ENCODE measurements at regions of chr22 and their contacts with region 1.

Region 1: DNA sequence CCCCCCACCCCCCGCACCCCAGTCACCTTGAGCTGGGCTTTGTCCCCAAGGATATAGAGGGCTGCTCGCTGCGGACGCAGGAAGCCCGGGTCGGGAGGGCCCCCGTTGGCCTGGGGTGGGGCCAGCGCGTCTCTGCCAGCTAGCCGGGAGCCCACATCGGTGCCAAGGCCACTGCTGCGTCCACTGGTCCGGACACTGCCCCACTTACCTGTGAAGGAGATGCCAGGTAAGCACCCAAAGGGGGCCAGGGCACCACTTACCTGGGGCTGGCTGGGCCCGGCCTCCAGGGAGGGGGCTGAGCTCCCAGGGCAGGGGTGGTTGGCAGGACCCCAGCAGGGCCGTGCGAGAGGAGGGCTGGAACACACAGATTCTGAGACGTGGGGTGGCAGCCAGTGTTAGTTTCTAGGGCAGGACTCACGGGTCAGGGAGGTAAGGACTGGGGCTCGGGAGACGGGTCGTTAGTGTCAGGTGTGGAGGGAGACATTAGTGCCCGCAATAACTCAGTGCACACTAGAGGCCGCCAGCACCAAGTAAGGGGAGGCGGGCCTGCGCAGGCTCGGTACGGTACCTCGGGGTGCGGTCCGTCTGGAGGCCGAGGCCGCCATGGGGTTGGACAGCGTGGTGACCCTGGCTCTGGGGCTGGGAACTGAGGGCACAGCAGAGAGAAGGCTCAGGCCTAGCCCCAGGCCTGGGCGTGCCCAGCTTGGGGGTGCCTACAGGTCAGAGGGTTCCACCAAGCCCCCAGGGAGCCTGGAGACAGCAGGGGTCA is 18.2 kb downstream of the SBF1 start:
- DNase-seq: no peak
- H3K4me3 Mint-ChIP-seq: no peak overlapping the region
- H3K27ac Mint-ChIP-seq: no peak overlapping the region
- H3K4me1 Mint-ChIP-seq: peaks cover 3% of the 10 kb centered on the region
- H3K27me3 Mint-ChIP-seq: no peaks in the 10 kb centered on the region

Region 2: DNA sequence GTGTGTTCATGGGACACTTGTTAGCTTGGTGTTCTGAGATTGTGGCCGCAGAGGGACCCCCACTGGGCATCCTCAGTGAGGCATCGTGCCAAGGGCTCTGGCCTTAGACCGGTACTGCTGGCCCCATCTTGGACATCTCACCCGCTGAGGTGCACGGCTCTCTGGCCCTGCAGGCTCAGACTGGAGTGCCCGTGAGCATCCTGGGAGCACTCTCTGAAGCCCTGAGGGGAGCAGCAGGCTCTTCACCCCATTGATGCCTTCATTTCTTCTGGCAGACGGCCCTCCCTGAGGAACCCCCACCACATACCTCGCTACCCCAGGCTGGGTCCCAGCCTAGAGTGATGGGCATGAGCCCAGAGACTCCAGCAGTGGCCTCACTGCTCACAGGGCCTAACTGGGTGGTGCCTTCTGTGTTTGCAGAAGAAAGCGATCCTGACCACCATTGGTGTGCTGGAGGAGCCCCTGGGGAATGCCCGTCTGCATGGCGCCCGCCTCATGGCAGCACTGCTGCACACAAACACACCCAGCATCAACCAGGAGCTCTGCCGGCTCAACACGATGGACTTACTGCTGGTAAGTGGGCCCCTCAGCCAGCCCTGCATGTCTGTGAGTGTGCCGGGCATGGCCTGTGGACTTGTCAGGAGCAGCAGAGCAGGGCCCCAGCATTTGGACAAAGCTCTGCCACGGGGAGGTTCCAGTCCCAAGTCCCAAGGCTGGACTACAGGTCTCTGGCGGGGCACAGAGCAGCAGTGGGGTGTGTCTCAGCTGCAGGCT is 33.4 kb before region 1 on chr22:
- CTCF ChIA-PET with region 1: no interaction called
- DNase-seq: no peak
- H3K4me3 Mint-ChIP-seq: no peak overlapping the region
- H3K27ac Mint-ChIP-seq: no peak overlapping the region
- H3K4me1 Mint-ChIP-seq: no peaks in the 10 kb centered on the region
- H3K27me3 Mint-ChIP-seq: no peaks in the 10 kb centered on the region

Region 3: DNA sequence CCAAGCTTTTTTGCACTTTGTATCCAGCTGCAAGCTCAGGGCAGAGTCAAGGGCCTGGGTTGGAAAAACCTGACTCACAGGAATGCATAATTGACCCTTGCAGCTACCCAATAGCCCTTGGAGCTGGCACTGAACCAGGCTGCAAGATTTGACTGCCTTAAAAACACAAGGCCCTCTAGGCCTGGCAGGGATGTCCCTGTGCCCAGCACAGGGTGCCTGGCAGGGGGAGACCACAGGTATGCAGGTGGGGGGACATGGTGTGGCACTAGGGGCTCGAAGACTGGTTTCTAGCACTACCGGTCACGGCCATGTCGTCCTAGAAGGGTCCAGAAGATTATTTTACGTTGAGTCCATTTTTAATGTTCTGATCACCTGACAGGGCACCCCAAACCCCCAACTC is 12.0 kb before region 1 on chr22:
- CTCF ChIA-PET with region 1: no interaction called
- DNase-seq: no peak
- H3K4me3 Mint-ChIP-seq: no peak overlapping the region
- H3K27ac Mint-ChIP-seq: peak overlapping the region; percentile 65
- H3K4me1 Mint-ChIP-seq: peaks cover 11% of the 10 kb centered on the region
- H3K27me3 Mint-ChIP-seq: no peaks in the 10 kb centered on the region

Region 4: GRCh38 chr22:50474668-50475492 is 18.2 kb after region 1 on chr22 and contains the start of gene SBF1:
- CTCF ChIA-PET with region 1: interaction called, 14 read pairs
- DNase-seq: peak; percentile 92
- H3K4me3 Mint-ChIP-seq: peak within 1 kb of the TSS; percentile 86
- H3K27ac Mint-ChIP-seq: peak within 1 kb of the TSS; percentile 91
- H3K4me1 Mint-ChIP-seq: peaks cover 57% of the 10 kb centered on the region
- H3K27me3 Mint-ChIP-seq: peaks cover 33% of the 10 kb centered on the region

Region 5: DNA sequence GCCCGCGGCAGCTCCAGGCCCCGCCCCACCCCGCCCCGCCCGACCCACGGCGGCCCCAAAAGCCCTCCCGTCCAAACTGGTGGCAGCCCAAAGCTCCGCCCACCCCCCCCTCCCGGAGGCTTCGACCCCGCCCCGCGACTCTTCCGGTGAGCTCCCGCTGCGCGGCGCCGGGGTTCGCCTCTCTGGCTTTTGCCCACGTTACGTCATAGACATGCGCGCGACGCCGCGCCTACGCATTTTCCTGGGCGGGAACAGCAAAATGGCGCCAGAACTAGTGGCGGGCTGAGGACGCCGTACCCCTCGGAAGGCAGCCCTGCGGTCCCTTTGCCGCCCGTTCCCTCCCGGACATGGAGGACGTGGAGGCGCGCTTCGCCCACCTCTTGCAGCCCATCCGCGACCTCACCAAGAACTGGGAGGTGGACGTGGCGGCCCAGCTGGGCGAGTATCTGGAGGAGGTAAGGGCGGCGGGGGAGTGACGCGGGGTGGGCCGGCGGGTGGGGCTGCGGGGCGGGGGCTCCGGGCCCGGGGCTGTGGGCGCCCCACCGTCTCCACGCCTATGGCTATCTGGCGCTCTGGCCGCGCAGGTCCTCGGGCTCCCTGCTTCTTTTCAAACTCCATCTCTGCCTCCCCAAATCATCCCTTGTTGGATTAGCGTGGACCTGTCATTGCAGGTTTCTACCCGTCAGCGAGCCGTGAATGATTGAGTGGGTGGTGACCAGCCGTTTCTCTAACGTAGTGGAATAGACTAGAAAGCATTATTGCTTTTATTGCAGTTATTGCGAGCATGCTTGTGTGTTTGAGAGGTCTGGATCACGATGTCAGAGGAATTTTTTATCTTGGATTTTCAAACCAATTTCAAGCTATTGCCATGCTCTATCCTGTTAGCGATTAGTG is 51.6 kb after region 1 on chr22 and contains the start of gene NCAPH2:
- CTCF ChIA-PET with region 1: no interaction called
- DNase-seq: peak; percentile 97
- H3K4me3 Mint-ChIP-seq: peak within 1 kb of the TSS; percentile 93
- H3K27ac Mint-ChIP-seq: peak within 1 kb of the TSS; percentile 96
- H3K4me1 Mint-ChIP-seq: peaks cover 34% of the 10 kb centered on the region
- H3K27me3 Mint-ChIP-seq: no peaks in the 10 kb centered on the region

Measured in activated naive CD4-positive, alpha-beta T cell treated with anti-CD3 and anti-CD28 coated beads, Interleukin-2, amount 10 ng/mL, durations not matched to agents 7 days and 5 days (primary cell).